ENCODE measurements at regions of chr12 and their contacts with region 1.

Region 1: DNA sequence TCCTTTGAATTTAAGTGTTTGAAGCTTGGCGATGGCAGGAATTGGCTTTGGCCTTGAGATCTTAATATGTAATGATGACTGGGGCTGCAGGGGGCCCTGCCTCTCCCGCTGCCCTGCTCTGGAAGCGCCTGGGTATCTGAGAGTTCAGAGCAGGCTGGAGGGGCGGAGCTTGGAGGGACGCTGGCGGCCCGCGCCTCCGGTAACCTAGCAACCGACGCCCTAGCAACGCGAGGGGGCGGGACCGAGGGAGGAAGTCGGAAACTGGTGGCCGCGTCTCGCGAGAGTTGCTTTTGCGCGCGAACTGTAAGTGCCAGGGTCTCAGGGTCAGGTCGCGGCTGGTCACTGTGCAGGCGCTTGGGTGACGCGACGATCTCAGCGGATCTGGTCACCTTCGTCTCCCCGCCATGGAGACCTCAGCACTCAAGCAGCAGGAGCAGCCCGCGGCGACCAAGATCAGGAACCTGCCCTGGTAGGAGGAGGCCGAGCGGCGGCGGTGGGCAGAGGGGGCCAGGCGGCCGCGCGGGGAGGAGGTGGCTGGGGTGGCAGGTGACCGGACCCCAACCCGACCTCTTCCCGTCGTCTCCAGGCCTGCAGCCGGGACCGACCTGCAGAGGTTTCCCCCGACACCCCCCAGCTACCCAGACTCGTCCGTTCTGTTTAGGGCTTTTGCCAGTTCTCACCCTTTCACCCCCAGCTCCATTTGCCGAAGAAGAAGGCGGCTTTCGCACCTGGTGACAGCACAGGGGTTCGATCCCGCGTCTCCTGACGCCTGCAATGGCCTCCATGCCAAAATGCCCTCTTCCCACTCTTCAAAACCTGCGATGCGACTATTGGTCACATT is at the start of gene RFC5:
- DNase-seq: peak; percentile 90
- H3K4me3 ChIP-seq: peak within 1 kb of the TSS; percentile 69 to 97 (median 80)
- H3K27ac ChIP-seq: peak within 1 kb of the TSS; percentile 76
- H3K4me1 ChIP-seq: peaks cover 14% of the 10 kb centered on the region
- H3K27me3 ChIP-seq: no peaks in the 10 kb centered on the region
- CTCF ChIP-seq: no peak
- total RNA-seq, gene RFC5: 11.5 to 24.0 TPM

Region 2: GRCh38 chr12:117986705-117987469 is 29.8 kb before region 1 on chr12:
- CTCF ChIA-PET with region 1: no interaction called
- dilution Hi-C with region 1: no loop called
- in situ Hi-C with region 1: no loop called
- intact Hi-C with region 1: loop called (anchors 2 kb)
- DNase-seq: peak; percentile 90
- H3K4me3 ChIP-seq: no peak overlapping the region
- H3K27ac ChIP-seq: peak overlapping the region; percentile 82
- H3K4me1 ChIP-seq: peaks cover 18% of the 10 kb centered on the region
- H3K27me3 ChIP-seq: no peaks in the 10 kb centered on the region
- CTCF ChIP-seq: no peak

Region 3: DNA sequence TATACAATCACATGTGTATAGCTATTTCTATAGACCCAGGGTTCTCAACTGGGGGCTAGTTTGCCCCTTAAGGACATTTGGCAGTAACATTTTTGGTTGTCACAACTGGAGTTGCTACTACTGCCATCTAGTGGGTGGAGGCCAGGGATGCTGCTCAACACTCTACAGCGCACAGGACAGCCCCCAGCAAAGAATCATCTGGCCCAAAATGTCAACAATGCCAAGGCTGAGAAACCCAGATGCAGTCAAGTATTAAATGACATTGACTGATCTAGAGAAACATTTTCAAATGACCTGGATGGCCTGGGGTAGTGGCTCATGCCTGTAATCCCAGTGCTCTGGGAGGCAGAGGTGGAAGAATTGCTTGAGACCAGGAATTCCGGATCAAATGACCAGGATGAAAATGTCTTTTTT is 38.5 kb after region 1 on chr12:
- CTCF ChIA-PET with region 1: no interaction called
- dilution Hi-C with region 1: no loop called
- in situ Hi-C with region 1: no loop called
- intact Hi-C with region 1: no loop called
- DNase-seq: no peak
- H3K4me3 ChIP-seq: no peak overlapping the region
- H3K27ac ChIP-seq: no peak overlapping the region
- H3K4me1 ChIP-seq: peaks cover 34% of the 10 kb centered on the region
- H3K27me3 ChIP-seq: no peaks in the 10 kb centered on the region
- CTCF ChIP-seq: peak; percentile 59 to 64

Measured in mammary epithelial cell (primary cell).